Activated CD4-positive, alpha-beta T cell treated with anti-CD3 and anti-CD28 coated beads, Interleukin-2, amount 10 ng/mL, durations not matched to agents 24 days and 14 days (primary cell): ENCODE measurements at regions of chr14 and their contacts with region 1.

Region 1: DNA sequence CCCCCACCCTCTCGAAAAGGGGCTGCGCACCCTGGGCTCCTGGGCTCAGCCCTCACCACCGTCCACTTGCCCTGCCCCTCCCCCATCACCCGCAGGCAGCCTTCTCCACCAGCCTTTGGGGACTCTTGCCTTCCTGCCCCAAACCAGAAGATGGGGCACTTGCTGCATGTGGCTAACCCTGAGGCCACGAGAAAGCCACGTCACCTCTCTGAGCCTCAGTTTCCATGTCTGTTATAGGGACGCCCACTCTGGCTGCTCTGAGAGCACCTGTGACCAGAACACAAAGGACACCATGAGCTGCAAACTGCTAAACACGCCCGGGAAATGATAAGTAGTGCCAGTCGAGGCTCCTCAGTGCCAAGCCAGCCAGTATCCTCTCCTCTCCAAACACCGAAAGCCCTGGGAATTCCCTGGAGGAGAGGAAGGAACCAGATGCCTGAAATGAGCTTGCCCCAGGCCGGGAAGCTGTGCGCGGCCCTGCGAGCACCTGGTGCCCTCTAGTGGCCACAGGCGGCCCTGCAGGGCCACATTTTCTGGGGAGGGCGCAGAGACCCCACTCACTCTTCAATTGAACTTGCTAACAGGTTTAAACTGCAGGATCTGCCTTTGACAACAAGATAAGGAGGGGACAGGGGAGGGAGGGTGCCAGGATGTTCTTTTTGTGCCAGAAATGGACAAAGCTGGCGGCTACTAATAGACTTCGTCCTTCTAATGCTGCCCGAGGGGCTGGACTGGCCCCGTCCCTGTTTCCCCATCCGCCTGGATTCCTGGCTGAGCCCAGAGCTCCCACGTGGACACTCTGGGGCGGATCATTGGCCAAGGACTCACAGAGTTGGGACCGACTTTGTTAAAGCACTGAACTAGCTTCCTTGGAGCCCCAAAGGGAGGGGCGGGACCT is 10.2 kb upstream of the SERPINA9 start:
- DNase-seq: peak; percentile 85
- H3K4me3 Mint-ChIP-seq: no peak overlapping the region
- H3K27ac Mint-ChIP-seq: no peak overlapping the region
- H3K4me1 Mint-ChIP-seq: peaks cover 1% of the 10 kb centered on the region
- H3K27me3 Mint-ChIP-seq: no peaks in the 10 kb centered on the region

Region 2: DNA sequence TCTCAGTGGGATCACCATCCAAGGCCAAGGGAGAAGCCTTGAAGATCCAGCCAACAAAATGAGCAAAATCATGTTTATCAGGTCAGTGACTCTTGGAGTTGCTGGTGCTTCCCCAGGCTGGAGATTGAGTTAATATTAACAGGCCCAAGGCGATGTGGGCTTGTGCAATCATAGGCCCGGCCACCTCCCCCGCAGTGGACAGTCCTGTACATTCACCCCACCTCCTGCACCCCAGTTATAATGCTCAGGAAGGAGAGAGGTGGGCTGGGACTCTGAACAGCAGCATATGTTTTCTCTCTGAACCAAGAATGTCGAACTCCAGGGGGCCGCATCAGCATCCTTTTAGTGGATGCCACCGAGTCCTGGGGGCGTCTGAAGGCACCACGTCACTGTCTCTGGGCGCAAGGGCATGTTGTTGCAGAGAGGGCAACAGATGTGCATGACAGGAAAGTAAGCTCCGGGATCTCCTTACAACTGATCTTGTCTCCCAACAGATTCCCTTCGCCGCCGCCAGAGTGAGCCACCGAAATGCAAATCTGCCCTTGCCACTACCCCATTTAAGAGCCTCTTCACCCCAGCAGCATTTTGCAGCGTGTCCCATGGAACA is 130.9 kb before region 1 on chr14:
- intact Hi-C with region 1: loop called (anchors 5 kb)
- DNase-seq: no peak
- H3K4me3 Mint-ChIP-seq: no peak overlapping the region
- H3K27ac Mint-ChIP-seq: no peak overlapping the region
- H3K4me1 Mint-ChIP-seq: no peaks in the 10 kb centered on the region
- H3K27me3 Mint-ChIP-seq: peaks cover 33% of the 10 kb centered on the region

Region 3: DNA sequence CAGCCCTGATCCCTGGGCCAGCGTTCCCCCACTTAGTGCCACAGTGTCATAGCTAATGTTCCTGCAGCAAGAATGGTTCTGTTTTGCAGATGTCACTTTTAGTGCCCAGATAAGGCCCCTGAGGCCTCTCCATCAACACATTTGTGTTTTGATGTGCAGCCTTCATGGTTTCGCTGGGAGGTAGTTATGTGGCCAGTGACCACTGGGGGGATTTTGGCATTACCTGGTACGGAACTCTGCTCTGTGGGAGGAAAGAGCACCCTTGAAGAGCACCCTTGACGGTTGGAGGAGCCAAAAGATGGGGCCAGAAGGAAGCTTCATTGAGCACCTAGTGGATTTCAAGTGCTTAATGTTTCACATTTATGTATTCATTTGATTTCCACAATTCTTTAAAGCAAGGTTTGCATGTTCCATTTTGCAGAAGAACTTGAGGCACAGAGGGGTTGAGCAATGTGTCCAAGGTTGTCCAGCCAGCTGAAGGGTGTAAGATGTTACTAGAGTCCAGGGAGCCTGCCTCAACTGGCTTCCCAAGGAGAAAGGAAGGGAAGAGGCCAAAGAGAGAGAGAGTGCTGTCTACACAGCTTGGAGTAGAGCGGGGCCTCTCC is 46.6 kb before region 1 on chr14:
- intact Hi-C with region 1: loop called (anchors 1 kb)
- DNase-seq: no peak
- H3K4me3 Mint-ChIP-seq: no peak overlapping the region
- H3K27ac Mint-ChIP-seq: no peak overlapping the region
- H3K4me1 Mint-ChIP-seq: no peaks in the 10 kb centered on the region
- H3K27me3 Mint-ChIP-seq: peaks cover 11% of the 10 kb centered on the region